Activated T-helper 2 cell treated with anti-CD3 and anti-CD28 coated beads, Interferon-gamma antibody, Interleukin-2, Interleukin-4, amounts not matched to agents 10 μg/mL and 5 μg/mL and 100 μg/mL, durations not matched to agents 14 hours and 24 hours and 36 hours (primary cell): ENCODE measurements at regions of chr11 and their contacts with region 1.

Region 1: GRCh38 chr11:44936525-44936924 is 14.2 kb downstream of the TP53I11 start:
- DNase-seq: peak; percentile 67
- H3K4me3 Mint-ChIP-seq: no peak overlapping the region
- H3K27ac Mint-ChIP-seq: no peak overlapping the region
- H3K4me1 Mint-ChIP-seq: no peaks in the 10 kb centered on the region
- H3K27me3 Mint-ChIP-seq: no peaks in the 10 kb centered on the region

Region 2: DNA sequence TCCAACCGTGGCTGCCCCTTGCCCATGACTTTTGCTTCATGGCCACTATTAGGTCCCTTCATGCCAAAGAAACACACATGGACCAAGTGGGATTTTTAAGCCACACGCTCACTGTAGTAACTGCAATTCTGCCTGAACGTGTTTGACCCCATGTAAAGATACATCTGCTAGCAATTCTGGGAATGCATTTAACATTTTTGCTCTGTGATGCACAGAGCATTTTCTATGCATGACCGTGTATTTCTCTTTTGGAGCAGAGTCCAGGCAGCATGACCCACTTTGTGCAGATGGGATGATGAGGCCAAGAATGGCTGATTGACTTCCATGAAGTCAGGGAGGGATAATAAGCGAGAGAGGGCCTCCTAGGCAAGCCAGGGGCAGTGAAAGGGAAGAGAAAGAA is 94.3 kb before region 1 on chr11:
- intact Hi-C with region 1: no loop called
- DNase-seq: no peak
- H3K4me3 Mint-ChIP-seq: no peak overlapping the region
- H3K27ac Mint-ChIP-seq: no peak overlapping the region
- H3K4me1 Mint-ChIP-seq: no peaks in the 10 kb centered on the region
- H3K27me3 Mint-ChIP-seq: peaks cover 7% of the 10 kb centered on the region

Region 3: DNA sequence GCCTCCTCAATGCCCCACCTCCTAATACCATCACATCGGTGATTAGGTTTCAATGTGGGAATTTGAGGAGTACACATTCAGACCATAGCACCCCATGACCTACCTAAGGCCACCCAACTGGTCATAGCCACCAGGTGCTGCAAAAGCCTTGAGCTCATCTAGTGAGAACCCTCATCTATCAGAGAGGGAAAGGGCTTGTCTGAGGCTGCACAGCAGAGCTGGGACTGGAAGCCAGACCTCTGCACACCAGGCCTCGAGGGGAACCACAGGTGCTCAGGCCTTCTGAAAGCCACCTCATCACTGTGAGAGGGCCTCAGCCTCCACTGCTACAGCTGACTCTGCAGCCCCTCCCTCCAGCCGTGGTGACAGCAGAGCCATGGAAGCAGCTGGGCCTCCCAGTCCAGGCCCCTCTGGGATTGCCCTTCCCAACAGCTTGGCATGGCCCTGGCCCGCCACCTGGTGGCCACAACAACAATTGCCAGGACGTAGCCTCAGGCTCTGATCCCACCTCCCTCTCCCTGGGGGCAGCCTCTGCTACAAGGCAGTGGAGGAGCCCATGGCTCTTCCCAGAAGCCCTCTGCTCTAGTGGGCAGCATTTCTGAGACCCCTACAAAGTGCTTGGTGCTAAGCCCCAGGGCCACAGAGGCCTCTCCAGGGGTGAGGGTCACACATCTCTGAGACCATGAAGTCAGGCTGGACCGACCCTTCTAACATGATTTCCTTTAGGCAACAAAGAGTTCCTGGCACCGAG is 168.9 kb after region 1 on chr11:
- intact Hi-C with region 1: loop called (anchors 1 kb)
- DNase-seq: peak; percentile 32
- H3K4me3 Mint-ChIP-seq: no peak overlapping the region
- H3K27ac Mint-ChIP-seq: no peak overlapping the region
- H3K4me1 Mint-ChIP-seq: peaks cover 9% of the 10 kb centered on the region
- H3K27me3 Mint-ChIP-seq: peaks cover under 1% of the 10 kb centered on the region

Region 4: DNA sequence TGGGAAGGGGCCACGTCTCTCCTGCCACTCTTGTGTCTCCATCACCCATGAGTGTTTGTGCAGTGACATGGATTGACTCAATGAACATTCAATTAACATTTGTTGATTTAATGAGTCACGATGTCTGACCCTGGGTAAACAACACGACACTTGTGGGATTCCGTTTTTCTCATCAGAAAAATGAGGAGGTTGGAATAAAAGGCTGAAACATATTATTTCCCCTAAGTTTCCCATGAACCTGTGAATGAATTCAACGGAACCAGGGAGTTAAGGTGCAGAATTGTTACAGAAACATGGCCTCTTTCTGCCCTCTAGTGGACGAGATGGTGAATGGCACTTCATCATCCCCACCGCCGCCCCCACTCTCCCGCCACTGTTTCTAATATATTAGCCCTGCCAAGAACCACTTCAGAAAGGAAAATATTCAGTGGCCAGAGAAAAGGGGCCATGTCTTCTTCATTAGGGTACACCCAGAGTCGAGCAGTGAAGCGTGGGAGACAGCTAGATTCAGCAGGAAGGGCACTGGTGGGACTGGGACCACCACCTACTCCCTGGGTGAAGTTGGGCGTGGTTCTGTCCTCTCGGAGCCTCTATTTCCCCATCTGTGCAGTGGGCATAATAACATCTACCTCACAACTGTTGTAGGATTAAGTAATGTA is 395.9 kb after region 1 on chr11:
- intact Hi-C with region 1: loop called (anchors 5 kb)
- DNase-seq: no peak
- H3K4me3 Mint-ChIP-seq: no peak overlapping the region
- H3K27ac Mint-ChIP-seq: no peak overlapping the region
- H3K4me1 Mint-ChIP-seq: no peaks in the 10 kb centered on the region
- H3K27me3 Mint-ChIP-seq: peaks cover 8% of the 10 kb centered on the region